Calu3 (cell line): ENCODE measurements at regions of chrX and their contacts with region 1.

Region 1: DNA sequence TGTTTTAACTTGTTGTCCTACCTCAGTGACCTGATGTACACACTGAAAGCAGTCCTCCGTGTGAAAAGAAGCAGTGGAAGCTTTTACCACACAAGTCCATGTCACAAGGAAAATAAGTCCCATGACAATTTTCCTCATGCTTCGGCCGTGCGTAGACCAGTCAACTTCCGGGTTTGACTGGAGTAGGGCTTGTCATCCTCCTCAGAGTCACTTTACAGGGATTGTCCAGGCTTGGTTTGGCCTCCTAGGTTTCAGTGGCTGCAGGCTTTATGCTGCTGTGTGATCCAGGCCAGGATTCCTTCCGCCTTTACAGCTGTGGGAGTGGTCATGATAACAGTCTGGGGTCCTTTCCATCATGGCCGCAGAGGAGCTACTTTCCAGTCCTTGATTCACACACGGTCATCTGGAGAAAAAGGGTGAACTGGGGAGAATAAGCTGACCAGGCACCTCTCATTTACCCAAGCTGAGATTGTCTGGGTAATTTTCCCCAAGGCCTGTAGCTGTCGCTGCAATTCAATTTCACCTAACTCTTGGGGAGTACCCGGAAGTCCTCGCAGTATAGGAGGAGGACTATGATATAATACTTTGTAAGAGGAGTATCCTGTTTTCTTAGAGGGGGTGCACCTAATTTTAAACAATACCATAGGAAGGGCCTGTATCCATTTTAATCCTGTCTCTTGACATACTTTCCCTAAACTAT is 206.1 kb upstream of the KLF8 start:
- DNase-seq: peak; percentile 2
- H3K4me3 Mint-ChIP-seq: no peak overlapping the region
- H3K27ac Mint-ChIP-seq: no peak overlapping the region
- H3K4me1 Mint-ChIP-seq: peaks cover 19% of the 10 kb centered on the region
- H3K27me3 Mint-ChIP-seq: no peaks in the 10 kb centered on the region
- CTCF ChIP-seq: no peak

Region 2: GRCh38 chrX:56113785-56114436 is 87.9 kb after region 1 on chrX:
- CTCF ChIA-PET with region 1: no interaction called
- intact Hi-C with region 1: loop called (anchors 5 kb)
- DNase-seq: peak; percentile 84
- H3K4me3 Mint-ChIP-seq: peak overlapping the region; percentile 24
- H3K27ac Mint-ChIP-seq: peak overlapping the region; percentile 81
- H3K4me1 Mint-ChIP-seq: peaks cover 6% of the 10 kb centered on the region
- H3K27me3 Mint-ChIP-seq: no peaks in the 10 kb centered on the region
- CTCF ChIP-seq: no peak

Region 3: DNA sequence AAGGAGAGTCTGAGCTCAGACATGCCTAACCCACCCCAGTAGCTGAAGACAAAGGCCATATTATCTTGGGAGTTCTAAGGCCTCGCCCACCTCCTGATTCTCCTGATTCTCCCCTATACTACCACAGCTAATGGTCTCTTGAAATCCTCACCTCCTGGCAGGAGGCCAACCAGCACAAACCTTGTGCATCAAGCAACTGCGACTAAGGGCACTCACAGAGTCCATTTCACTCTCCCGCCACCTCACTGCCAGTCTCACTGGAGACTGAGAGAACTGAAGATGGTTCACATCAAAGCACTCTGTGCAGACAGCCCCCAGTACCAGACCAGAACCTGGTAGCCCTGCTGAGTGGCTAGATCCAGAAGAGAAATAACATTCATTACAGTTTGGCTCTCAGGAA is 104.0 kb after region 1 on chrX:
- CTCF ChIA-PET with region 1: no interaction called
- intact Hi-C with region 1: loop called (anchors 5 kb)
- DNase-seq: peak; percentile 55
- H3K4me3 Mint-ChIP-seq: peak overlapping the region; percentile 41
- H3K27ac Mint-ChIP-seq: peak overlapping the region; percentile 82
- H3K4me1 Mint-ChIP-seq: peaks cover 64% of the 10 kb centered on the region
- H3K27me3 Mint-ChIP-seq: no peaks in the 10 kb centered on the region
- CTCF ChIP-seq: no peak

Region 4: DNA sequence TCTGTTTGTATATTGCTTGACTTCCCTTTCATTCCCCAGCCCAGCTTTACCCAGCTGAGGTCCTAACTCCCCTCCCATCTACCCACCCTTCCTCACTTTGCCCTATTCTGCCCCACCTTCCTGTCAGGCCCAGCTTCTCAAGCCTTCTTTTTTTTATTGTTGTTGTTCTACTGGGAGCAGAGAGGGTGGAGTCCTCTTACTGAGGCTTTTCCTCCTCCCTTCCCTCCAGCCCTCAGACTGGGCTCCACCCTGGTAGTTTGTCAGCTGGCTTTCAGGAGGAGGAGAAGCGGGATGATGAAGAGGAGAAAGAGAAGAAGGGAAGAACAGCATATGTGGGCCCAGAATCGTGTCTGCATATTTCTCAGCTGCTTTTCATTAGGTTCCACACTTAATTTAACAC is 202.9 kb after region 1 on chrX:
- CTCF ChIA-PET with region 1: no interaction called
- intact Hi-C with region 1: loop called (anchors 5 kb)
- DNase-seq: no peak
- H3K4me3 Mint-ChIP-seq: no peak overlapping the region
- H3K27ac Mint-ChIP-seq: no peak overlapping the region
- H3K4me1 Mint-ChIP-seq: peaks cover 7% of the 10 kb centered on the region
- H3K27me3 Mint-ChIP-seq: no peaks in the 10 kb centered on the region
- CTCF ChIP-seq: no peak